MCF 10A (cell line): ENCODE measurements at regions of chr16 and their contacts with region 1.

Region 1: GRCh38 chr16:51431517-51432241 is 280.6 kb upstream of the SALL1 start:
- DNase-seq: peak; percentile 95
- H3K4me3 Mint-ChIP-seq: peak overlapping the region; percentile 8
- H3K27ac Mint-ChIP-seq: peak overlapping the region; percentile 79
- H3K4me1 Mint-ChIP-seq: peaks cover 24% of the 10 kb centered on the region
- H3K27me3 Mint-ChIP-seq: no peaks in the 10 kb centered on the region
- CTCF ChIP-seq: no peak

Region 2: GRCh38 chr16:51355195-51355594 is 76.5 kb before region 1 on chr16:
- CTCF ChIA-PET with region 1: no interaction called
- POLR2A ChIA-PET with region 1: no interaction called
- intact Hi-C with region 1: no loop called
- DNase-seq: no peak
- H3K4me3 Mint-ChIP-seq: no peak overlapping the region
- H3K27ac Mint-ChIP-seq: no peak overlapping the region
- H3K4me1 Mint-ChIP-seq: no peaks in the 10 kb centered on the region
- H3K27me3 Mint-ChIP-seq: no peaks in the 10 kb centered on the region
- CTCF ChIP-seq: no peak

Region 3: GRCh38 chr16:51402785-51403184 is 28.9 kb before region 1 on chr16:
- CTCF ChIA-PET with region 1: no interaction called
- POLR2A ChIA-PET with region 1: no interaction called
- intact Hi-C with region 1: no loop called
- DNase-seq: no peak
- H3K4me3 Mint-ChIP-seq: no peak overlapping the region
- H3K27ac Mint-ChIP-seq: peak overlapping the region; percentile 5
- H3K4me1 Mint-ChIP-seq: peaks cover 34% of the 10 kb centered on the region
- H3K27me3 Mint-ChIP-seq: no peaks in the 10 kb centered on the region
- CTCF ChIP-seq: no peak

Region 4: DNA sequence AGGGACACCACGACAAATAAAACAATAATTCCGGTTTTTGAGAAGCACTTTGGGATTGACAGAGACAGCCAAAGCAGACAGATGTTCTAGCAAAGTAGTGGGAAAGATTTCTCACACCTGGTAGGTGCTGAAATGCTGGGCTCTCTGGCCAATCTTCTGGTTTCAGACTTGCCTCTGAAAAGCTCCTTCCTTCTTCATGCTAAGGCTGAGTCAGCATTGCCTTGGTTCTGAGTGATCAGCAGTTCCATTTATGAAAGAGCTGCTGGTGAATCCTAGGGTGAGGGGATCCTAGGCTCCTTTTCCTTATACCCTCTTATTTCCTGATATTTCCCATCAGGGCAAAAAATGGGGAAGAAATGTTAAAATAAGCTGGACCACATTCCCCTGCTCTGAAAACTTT is 11.9 kb before region 1 on chr16:
- CTCF ChIA-PET with region 1: interaction called, 3 read pairs
- POLR2A ChIA-PET with region 1: interaction called, 13 read pairs
- intact Hi-C with region 1: no loop called
- DNase-seq: no peak
- H3K4me3 Mint-ChIP-seq: no peak overlapping the region
- H3K27ac Mint-ChIP-seq: no peak overlapping the region
- H3K4me1 Mint-ChIP-seq: peaks cover 11% of the 10 kb centered on the region
- H3K27me3 Mint-ChIP-seq: no peaks in the 10 kb centered on the region
- CTCF ChIP-seq: no peak